Gastrocnemius medialis (tissue), 4 donors: ENCODE measurements at regions of chr5 and their contacts with region 1.

Region 1: DNA sequence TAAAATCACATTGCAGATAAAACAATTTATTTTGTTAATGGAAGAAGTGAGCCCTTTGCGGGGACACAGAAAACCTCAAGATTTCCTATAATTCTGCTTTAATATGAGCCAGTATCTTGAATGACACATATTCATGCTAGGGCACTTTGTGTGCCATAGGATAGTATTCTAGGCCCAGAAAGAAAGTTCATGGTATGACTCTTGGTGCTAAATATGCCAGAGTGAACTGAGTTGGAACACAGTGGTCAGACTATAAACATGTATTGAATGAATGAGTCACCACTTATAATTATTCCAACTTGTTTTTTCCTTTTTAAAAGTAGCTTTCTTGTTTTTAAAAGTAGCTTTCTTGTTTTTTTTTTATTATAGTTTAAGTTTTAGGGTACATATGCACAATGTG is 46.0 kb downstream of the ADAMTS19 start:
- DNase-seq: no peak
- ATAC-seq: peak; percentile 86 to 99
- H3K4me3 ChIP-seq: no peak overlapping the region
- H3K27ac ChIP-seq: peak overlapping the region; percentile 5 to 72 (median 50)
- H3K4me1 ChIP-seq: peaks cover 5 to 9% of the 10 kb centered on the region in 2 donors
- H3K27me3 ChIP-seq: no peaks in the 10 kb centered on the region
- CTCF ChIP-seq: no peak
- POLR2A ChIP-seq: no peak

Region 2: GRCh38 chr5:129460936-129461711 is 45.0 kb before region 1 on chr5:
- in situ Hi-C with region 1: no loop called
- intact Hi-C with region 1: loop called (anchors 2 kb)
- DNase-seq: peak; percentile 14 to 42
- ATAC-seq: peak; percentile 58 to 59
- H3K4me3 ChIP-seq: peak overlapping the region; percentile 62 to 65 (median 63)
- H3K27ac ChIP-seq: peak overlapping the region; percentile 39 to 70 (median 63)
- H3K4me1 ChIP-seq: no peaks in the 10 kb centered on the region
- H3K27me3 ChIP-seq: peaks cover 0 to 3% (median 0%) of the 10 kb centered on the region in 3 donors
- CTCF ChIP-seq: peak in 3 of 5 experiments; percentile 24 to 36 (median 28)
- POLR2A ChIP-seq: no peak

Region 3: DNA sequence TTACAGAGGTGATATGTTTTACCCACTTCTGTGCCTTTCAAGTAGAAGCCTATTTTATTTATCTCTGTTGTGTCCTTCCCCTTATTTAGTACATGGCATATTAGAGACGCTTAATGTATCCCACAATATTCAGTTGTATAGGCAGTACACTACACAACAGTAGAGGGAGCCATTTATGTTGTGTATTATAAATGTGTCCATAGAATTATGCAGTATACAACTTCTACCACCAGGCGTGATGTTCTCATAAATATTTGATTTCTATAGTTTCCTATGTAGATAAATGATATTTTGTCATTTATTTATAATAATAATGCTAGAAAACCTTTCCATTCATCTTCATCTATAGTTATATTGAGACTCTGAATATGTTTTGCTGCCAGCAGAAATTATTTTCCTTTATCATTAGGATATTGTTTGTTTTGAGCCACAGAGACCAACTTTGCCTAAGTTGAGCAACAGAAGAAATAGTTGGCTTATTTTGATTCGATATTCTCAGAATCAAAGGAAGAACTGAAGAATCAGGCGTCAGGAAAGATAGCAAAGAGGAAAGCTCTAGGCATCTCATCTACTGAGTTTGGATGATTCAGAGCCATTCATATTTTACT is 35.7 kb after region 1 on chr5:
- in situ Hi-C with region 1: no loop called
- intact Hi-C with region 1: no loop called
- DNase-seq: no peak
- ATAC-seq: no peak
- H3K4me3 ChIP-seq: no peak overlapping the region
- H3K27ac ChIP-seq: no peak overlapping the region
- H3K4me1 ChIP-seq: no peaks in the 10 kb centered on the region
- H3K27me3 ChIP-seq: no peaks in the 10 kb centered on the region
- CTCF ChIP-seq: no peak
- POLR2A ChIP-seq: no peak

Region 4: DNA sequence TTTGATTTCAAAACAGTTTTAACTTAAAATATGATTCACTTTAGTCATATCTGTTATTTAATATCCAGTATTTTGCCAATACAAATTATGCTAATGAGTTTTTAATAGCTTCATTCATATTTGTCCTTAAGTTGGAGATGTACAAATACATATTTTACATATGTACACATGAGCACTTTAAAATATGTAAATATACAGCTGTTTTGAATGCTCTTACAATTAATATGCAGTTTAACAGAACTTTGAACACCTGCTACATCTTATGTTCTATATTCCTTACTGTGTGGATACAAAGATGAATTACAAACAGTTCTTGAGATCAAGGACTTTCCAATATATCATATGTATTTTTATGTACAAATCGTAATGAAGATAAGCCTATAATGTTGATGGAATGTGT is 472.2 kb after region 1 on chr5:
- in situ Hi-C with region 1: no loop called
- intact Hi-C with region 1: no loop called
- DNase-seq: no peak
- ATAC-seq: no peak
- H3K4me3 ChIP-seq: no peak overlapping the region
- H3K27ac ChIP-seq: no peak overlapping the region
- H3K4me1 ChIP-seq: no peaks in the 10 kb centered on the region
- H3K27me3 ChIP-seq: no peaks in the 10 kb centered on the region
- CTCF ChIP-seq: no peak
- POLR2A ChIP-seq: no peak